PC-9 (cell line): ENCODE measurements at regions of chr12 and their contacts with region 1.

Region 1: GRCh38 chr12:59142175-59142790 is 222.0 kb upstream of the LRIG3 start:
- DNase-seq: no peak
- H3K4me3 ChIP-seq: no peak overlapping the region
- H3K27ac ChIP-seq: no peak overlapping the region
- H3K4me1 ChIP-seq: no peaks in the 10 kb centered on the region
- H3K27me3 ChIP-seq: no peaks in the 10 kb centered on the region
- CTCF ChIP-seq: no peak

Region 2: DNA sequence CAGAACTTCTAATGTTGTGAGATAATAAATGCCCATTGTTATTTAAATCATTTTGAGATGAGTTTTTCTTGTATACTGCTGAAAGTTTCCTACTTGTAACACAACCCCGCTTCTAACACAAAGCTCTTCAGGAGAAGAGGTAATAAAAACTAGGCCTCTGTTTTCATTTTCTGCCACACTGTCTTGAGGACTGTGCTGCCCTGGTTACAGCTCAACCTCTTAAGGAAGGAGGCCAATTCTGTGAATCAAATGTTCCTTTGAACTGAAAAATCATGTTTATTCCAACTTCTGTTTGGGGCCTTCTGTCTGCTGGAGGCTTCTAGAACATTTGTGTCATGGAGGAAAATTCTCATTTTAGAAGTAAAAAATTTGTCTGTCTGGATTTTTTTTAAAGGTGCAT is 322.3 kb before region 1 on chr12:
- CTCF ChIA-PET with region 1: no interaction called
- POLR2A ChIA-PET with region 1: interaction called, 11 read pairs
- intact Hi-C with region 1: no loop called
- DNase-seq: no peak
- H3K4me3 ChIP-seq: no peak overlapping the region
- H3K27ac ChIP-seq: no peak overlapping the region
- H3K4me1 ChIP-seq: no peaks in the 10 kb centered on the region
- H3K27me3 ChIP-seq: no peaks in the 10 kb centered on the region
- CTCF ChIP-seq: no peak

Region 3: GRCh38 chr12:58967561-58967960 is 174.7 kb before region 1 on chr12:
- CTCF ChIA-PET with region 1: no interaction called
- POLR2A ChIA-PET with region 1: no interaction called
- intact Hi-C with region 1: no loop called
- DNase-seq: no peak
- H3K4me3 ChIP-seq: no peak overlapping the region
- H3K27ac ChIP-seq: no peak overlapping the region
- H3K4me1 ChIP-seq: no peaks in the 10 kb centered on the region
- H3K27me3 ChIP-seq: no peaks in the 10 kb centered on the region
- CTCF ChIP-seq: no peak